A673 (cell line): ENCODE measurements at regions of chr2 and their contacts with region 1.

Region 1: GRCh38 chr2:74119912-74120825 is 27.5 kb downstream of the BOLA3 start:
- DNase-seq: peak; percentile 92
- H3K4me3 ChIP-seq: peak overlapping the region; percentile 64
- H3K27ac ChIP-seq: peak overlapping the region; percentile 95
- H3K4me1 ChIP-seq: peaks cover 8% of the 10 kb centered on the region
- H3K27me3 ChIP-seq: no peaks in the 10 kb centered on the region
- CTCF ChIP-seq: peak; percentile 71

Region 2: GRCh38 chr2:73926493-73927338 is 193.5 kb before region 1 on chr2 and contains the start of gene DGUOK:
- CTCF ChIA-PET with region 1: no interaction called
- POLR2A ChIA-PET with region 1: no interaction called
- intact Hi-C with region 1: loop called (anchors 5 kb)
- DNase-seq: peak; percentile 100
- H3K4me3 ChIP-seq: peak within 1 kb of the TSS; percentile 80
- H3K27ac ChIP-seq: peak within 1 kb of the TSS; percentile 96
- H3K4me1 ChIP-seq: peaks cover 12% of the 10 kb centered on the region
- H3K27me3 ChIP-seq: no peaks in the 10 kb centered on the region
- CTCF ChIP-seq: no peak
- total RNA-seq, gene DGUOK: 106 and 107 TPM in 2 replicates

Region 3: DNA sequence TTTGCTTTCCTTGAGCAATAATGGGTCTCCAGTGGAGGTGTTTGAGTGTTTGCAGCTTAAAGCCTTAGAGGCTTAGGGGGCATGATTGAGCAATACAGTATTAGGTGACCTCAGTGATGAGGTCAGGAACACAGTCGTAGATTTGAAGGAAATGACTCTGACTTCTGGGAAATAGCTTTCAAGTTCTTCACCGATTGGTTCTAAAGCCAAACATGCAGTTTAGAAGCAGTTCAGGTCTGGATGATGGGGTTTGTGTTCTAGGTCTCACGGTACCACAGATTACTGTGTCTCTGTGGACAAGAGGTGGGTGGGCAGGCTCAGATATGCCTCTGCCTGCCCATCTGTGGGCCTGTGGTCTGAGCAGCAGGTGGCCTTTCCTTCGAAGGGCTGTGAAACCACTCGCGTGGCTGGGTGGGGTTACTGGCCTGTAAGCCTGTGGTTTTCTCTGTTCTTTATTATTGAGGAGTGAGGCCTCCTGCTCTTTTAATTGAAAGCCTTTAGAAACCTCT is 86.1 kb after region 1 on chr2:
- CTCF ChIA-PET with region 1: no interaction called
- POLR2A ChIA-PET with region 1: interaction called, 17 read pairs
- intact Hi-C with region 1: no loop called
- DNase-seq: no peak
- H3K4me3 ChIP-seq: no peak overlapping the region
- H3K27ac ChIP-seq: no peak overlapping the region
- H3K4me1 ChIP-seq: peaks cover 13% of the 10 kb centered on the region
- H3K27me3 ChIP-seq: no peaks in the 10 kb centered on the region
- CTCF ChIP-seq: no peak